Right lobe of liver (tissue), 6 donors: ENCODE measurements at regions of chr1 and their contacts with region 1.

Region 1: DNA sequence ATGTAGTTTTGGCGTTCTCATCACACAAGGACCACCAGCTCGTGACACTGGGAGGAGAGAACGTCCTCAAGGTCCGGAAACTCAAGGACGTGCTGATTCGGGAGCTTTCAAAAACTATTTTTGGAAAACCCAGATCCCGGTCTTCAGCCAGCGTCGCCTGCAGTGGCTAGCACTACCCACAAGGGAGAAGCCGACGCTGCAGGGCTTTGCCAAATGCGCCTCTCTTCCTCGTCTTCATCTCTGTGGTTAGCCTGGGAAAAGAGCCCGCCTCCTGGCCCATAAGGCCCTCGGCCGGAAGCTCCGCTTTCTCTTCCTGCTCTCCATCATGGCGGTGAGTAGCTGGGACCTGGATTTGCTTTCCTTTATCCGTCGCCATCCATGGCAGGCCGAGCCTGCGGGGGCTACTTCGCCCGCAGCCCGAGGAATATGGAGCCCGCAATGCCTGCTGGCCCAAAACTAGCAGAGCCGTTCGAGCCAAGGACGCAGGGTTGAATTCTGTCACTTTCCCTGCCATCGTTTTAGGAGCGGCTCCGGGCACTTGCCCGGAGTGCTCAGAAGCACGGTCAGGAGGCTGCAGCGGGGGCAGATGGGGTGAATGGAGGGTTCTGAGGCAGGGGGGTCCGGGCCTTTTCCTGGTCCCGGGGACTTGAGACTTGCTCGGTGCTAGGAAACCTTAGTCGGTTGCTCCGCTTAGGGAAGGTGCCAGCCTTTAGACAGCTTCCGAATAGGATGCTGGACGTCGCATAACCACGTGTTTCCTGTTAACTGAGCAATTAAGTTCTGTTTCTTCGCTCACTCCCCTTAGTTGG is at the start of gene RPL11:
- DNase-seq: peak; percentile 92 to 95 (median 93)
- ATAC-seq: peak; percentile 99 to 100 (median 100)
- H3K4me3 ChIP-seq: peak within 1 kb of the TSS; percentile 68 to 93 (median 76)
- H3K27ac ChIP-seq: peak within 1 kb of the TSS; percentile 67 to 71 (median 68)
- H3K4me1 ChIP-seq: peaks cover 0 to 24% (median 10%) of the 10 kb centered on the region in 4 donors
- H3K27me3 ChIP-seq: no peaks in the 10 kb centered on the region
- CTCF ChIP-seq: peak; percentile 79 to 89 (median 86)
- POLR2A ChIP-seq: peak; percentile 77
- total RNA-seq, gene RPL11: 341 to 471 (median 405) TPM

Region 2: GRCh38 chr1:23743287-23744052 is 51.8 kb after region 1 on chr1 and contains the start of gene ELOA:
- intact Hi-C with region 1: loop called in 1 of 2 experiments (anchors 10 kb)
- DNase-seq: peak; percentile 82 to 87 (median 85)
- ATAC-seq: peak; percentile 86 to 93 (median 92)
- H3K4me3 ChIP-seq: peak within 1 kb of the TSS; percentile 98 to 100 (median 100)
- H3K27ac ChIP-seq: peak within 1 kb of the TSS; percentile 88 to 94 (median 92)
- H3K4me1 ChIP-seq: peaks cover 0 to 41% (median 6%) of the 10 kb centered on the region in 4 donors
- H3K27me3 ChIP-seq: no peaks in the 10 kb centered on the region
- CTCF ChIP-seq: no peak
- POLR2A ChIP-seq: peak; percentile 85
- total RNA-seq, gene ELOA: 21.1 to 42.2 (median 36.1) TPM

Region 3: GRCh38 chr1:23751050-23751814 is 59.5 kb after region 1 on chr1:
- intact Hi-C with region 1: loop called (anchors 10 kb)
- DNase-seq: no peak
- ATAC-seq: peak; percentile 85 to 91 (median 87)
- H3K4me3 ChIP-seq: no peak overlapping the region
- H3K27ac ChIP-seq: no peak overlapping the region
- H3K4me1 ChIP-seq: peaks cover 0 to 25% (median 0%) of the 10 kb centered on the region in 4 donors
- H3K27me3 ChIP-seq: no peaks in the 10 kb centered on the region
- CTCF ChIP-seq: peak; percentile 57 to 75 (median 72)
- POLR2A ChIP-seq: no peak

Region 4: GRCh38 chr1:24289937-24290595 is 598.4 kb after region 1 on chr1:
- intact Hi-C with region 1: no loop called
- DNase-seq: peak; percentile 61 to 87 (median 80)
- ATAC-seq: peak; percentile 41 to 87 (median 58)
- H3K4me3 ChIP-seq: no peak overlapping the region
- H3K27ac ChIP-seq: no peak overlapping the region
- H3K4me1 ChIP-seq: peaks cover 0 to 13% (median 0%) of the 10 kb centered on the region in 4 donors
- H3K27me3 ChIP-seq: no peaks in the 10 kb centered on the region
- CTCF ChIP-seq: no peak
- POLR2A ChIP-seq: no peak